ENCODE measurements at regions of chr21 and their contacts with region 1.

Region 1: DNA sequence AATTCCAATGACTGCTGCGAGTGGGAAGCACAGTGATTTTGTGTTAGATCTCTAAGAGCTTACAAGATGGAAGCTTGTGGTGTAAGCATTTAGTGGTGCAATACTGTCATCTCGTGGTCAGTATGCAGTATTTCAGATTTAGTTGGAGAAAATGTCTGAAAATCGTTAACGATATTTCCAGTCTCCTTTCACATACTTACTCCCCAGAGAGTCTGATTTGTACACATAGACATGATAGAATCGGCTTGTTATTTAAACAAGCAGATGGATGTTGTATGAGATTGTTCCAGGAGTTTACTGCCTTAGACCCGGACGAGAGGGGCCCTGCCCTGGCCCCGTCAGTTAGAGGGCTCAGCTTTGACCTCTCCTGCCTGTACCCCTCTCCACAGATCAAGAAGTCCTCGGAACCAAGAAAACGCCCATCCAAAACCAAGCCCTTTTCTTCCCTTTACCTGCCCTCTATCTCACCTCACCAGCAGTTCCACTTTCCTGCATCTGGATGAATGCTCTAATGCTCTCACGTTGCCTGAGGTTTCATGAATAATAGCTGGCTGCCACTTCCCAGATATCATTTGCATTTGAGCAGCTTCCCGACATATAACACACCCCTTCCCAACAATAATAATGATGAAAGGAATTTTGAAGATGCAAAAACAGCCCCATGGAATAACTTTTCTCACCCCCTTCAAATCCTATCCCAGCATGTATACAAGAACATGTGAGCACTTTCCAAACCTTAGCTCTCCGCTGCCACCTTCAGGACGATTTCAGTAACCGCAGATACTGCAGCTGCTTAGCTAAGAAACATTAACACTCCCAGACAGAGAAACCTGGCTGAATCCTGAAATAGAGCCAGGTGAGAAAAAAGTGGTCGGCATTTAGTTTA is 247.3 kb downstream of the LTN1 start:
- DNase-seq: peak in 1 of 2 donors; percentile 79
- H3K4me3 ChIP-seq: peak overlapping the region; percentile 52 to 66
- H3K27ac ChIP-seq: peak overlapping the region; percentile 77 to 83
- H3K4me1 ChIP-seq: peaks cover 0 to 8% of the 10 kb centered on the region in 2 donors
- H3K27me3 ChIP-seq: no peaks in the 10 kb centered on the region
- CTCF ChIP-seq: peak; percentile 94 to 95 (median 95)

Region 2: DNA sequence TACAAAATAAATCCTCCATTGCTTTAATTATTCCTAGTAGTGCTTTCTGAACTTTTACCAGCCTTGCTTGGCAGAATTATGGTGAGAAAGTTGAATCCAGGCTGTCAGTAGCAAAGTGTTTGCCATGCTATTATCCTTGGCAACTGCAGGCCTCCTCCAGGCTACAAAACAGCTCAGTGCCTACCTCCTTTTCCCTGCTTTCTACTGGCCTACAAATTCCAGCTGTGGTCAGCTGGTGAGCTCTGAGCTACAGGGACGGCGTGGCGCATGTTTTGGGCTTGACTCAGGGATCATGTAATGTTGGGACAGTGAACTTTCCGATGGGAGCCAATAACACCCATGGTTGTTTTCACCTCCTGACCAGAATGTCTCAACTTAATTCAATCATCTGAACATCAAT is 1322.3 kb before region 1 on chr21:
- intact Hi-C with region 1: loop called (anchors 10 kb)
- DNase-seq: peak; percentile 23 to 92
- H3K4me3 ChIP-seq: no peak overlapping the region
- H3K27ac ChIP-seq: peak overlapping the region; percentile 60 to 64
- H3K4me1 ChIP-seq: peaks cover 8 to 29% of the 10 kb centered on the region in 2 donors
- H3K27me3 ChIP-seq: no peaks in the 10 kb centered on the region
- CTCF ChIP-seq: no peak

Region 3: DNA sequence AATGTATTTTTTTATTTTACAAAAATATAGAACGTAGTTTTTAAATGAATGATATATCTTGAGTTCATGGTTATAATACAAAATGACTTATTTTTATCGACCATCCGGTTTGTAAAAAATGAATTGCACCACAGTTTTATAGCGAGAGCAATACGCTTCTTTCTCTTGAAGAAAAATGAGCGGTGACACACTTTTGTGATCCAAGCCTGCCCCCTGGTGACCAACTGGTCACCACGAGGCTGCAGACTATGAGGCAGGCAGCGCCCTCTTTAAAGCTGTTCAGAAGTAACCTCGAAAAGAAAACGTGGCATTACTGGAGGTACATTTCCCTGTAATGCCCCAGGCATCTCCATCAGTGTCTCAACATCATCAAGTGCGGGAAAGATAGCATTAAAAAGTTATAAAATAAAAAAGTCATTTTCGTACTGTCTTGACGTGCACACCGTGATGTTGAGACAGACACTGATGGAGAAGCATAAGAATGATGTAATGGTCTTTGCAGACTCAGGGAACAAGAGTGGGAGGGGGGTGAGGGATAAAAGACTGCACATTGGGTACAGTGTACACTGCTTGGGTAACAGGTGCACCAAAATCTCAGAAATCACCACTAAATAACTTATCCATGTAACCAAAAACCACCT is 1044.3 kb before region 1 on chr21:
- intact Hi-C with region 1: loop called (anchors 2 kb)
- DNase-seq: peak; percentile 18 to 88
- H3K4me3 ChIP-seq: no peak overlapping the region
- H3K27ac ChIP-seq: no peak overlapping the region
- H3K4me1 ChIP-seq: no peaks in the 10 kb centered on the region
- H3K27me3 ChIP-seq: no peaks in the 10 kb centered on the region
- CTCF ChIP-seq: peak; percentile 73 to 87 (median 81)

Region 4: DNA sequence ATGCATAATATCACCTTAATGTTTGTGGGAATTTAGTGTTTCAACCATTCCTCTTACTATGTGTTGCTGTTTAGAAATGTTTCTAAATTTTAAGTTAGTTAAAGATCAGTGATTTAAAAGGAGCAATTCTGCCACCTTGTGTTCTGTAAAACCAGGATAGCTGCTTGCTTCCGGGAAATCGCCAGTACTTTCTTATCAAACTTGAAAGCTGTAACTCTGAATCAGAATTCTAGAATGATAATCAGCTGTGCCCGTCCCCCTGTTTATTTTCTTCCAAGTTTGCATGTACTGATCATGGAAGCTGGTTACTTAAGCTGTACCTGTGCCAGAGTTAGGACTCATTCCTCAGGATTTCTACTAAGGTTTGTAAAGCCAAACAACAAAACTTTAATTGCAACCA is 409.1 kb before region 1 on chr21:
- intact Hi-C with region 1: loop called (anchors 5 kb)
- DNase-seq: peak in 1 of 2 donors; percentile 63
- H3K4me3 ChIP-seq: no peak overlapping the region
- H3K27ac ChIP-seq: no peak overlapping the region
- H3K4me1 ChIP-seq: peaks cover 0 to 4% of the 10 kb centered on the region in 2 donors
- H3K27me3 ChIP-seq: no peaks in the 10 kb centered on the region
- CTCF ChIP-seq: peak in 2 of 3 experiments; percentile 17 to 53

Region 5: GRCh38 chr21:28537371-28538079 is 207.8 kb before region 1 on chr21:
- intact Hi-C with region 1: loop called (anchors 5 kb)
- DNase-seq: no peak
- H3K4me3 ChIP-seq: no peak overlapping the region
- H3K27ac ChIP-seq: peak overlapping the region; percentile 40 to 48
- H3K4me1 ChIP-seq: peaks cover 0 to 3% of the 10 kb centered on the region in 2 donors
- H3K27me3 ChIP-seq: no peaks in the 10 kb centered on the region
- CTCF ChIP-seq: no peak

Region 6: GRCh38 chr21:28663111-28663693 is 82.2 kb before region 1 on chr21:
- intact Hi-C with region 1: loop called (anchors 5 kb)
- DNase-seq: no peak
- H3K4me3 ChIP-seq: no peak overlapping the region
- H3K27ac ChIP-seq: no peak overlapping the region
- H3K4me1 ChIP-seq: peaks cover 0 to 3% of the 10 kb centered on the region in 2 donors
- H3K27me3 ChIP-seq: no peaks in the 10 kb centered on the region
- CTCF ChIP-seq: peak; percentile 6 to 47 (median 25)

Region 7: DNA sequence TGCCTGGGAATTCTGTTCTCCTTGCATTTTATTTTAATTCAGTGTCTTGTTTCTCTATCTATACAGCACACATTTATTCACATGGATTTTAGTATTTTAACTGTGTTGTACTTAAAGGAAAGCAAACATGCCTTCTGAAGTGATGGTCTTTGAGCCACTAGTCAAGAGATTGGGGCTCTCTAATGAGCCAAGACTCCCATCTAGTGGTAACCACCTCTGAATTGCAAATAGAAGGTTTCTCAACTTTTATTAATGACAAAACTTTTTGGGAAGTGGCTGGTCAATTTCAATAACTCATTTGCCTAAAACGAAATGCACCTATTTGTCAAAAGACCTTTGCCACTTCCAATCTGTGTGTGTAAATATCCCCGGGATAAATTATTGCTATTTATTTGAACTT is 47.7 kb after region 1 on chr21:
- intact Hi-C with region 1: loop called (anchors 2 kb)
- DNase-seq: no peak
- H3K4me3 ChIP-seq: no peak overlapping the region
- H3K27ac ChIP-seq: peak overlapping the region in 1 of 2 donors; percentile 24
- H3K4me1 ChIP-seq: no peaks in the 10 kb centered on the region
- H3K27me3 ChIP-seq: no peaks in the 10 kb centered on the region
- CTCF ChIP-seq: peak; percentile 37 to 67 (median 40)

Region 8: GRCh38 chr21:28986677-28987076 is 241.3 kb after region 1 on chr21:
- intact Hi-C with region 1: no loop called
- DNase-seq: no peak
- H3K4me3 ChIP-seq: no peak overlapping the region
- H3K27ac ChIP-seq: no peak overlapping the region
- H3K4me1 ChIP-seq: peaks cover under 1 to 6% of the 10 kb centered on the region in 2 donors
- H3K27me3 ChIP-seq: no peaks in the 10 kb centered on the region
- CTCF ChIP-seq: no peak